ENCODE measurements at regions of chr20 and their contacts with region 1.

Region 1: GRCh38 chr20:22379472-22379871 is 204.9 kb downstream of the FOXA2 start:
- DNase-seq: peak; percentile 99
- H3K4me3 Mint-ChIP-seq: no peak overlapping the region
- H3K27ac Mint-ChIP-seq: peak overlapping the region; percentile 75
- H3K4me1 Mint-ChIP-seq: peaks cover 77% of the 10 kb centered on the region
- H3K27me3 Mint-ChIP-seq: no peaks in the 10 kb centered on the region
- CTCF ChIP-seq: no peak

Region 2: GRCh38 chr20:22425344-22426295 is 46.1 kb after region 1 on chr20:
- CTCF ChIA-PET with region 1: no interaction called
- POLR2A ChIA-PET with region 1: no interaction called
- intact Hi-C with region 1: no loop called
- DNase-seq: no peak
- H3K4me3 Mint-ChIP-seq: no peak overlapping the region
- H3K27ac Mint-ChIP-seq: no peak overlapping the region
- H3K4me1 Mint-ChIP-seq: peaks cover 5% of the 10 kb centered on the region
- H3K27me3 Mint-ChIP-seq: no peaks in the 10 kb centered on the region
- CTCF ChIP-seq: no peak

Region 3: GRCh38 chr20:23629017-23629541 is 1249.6 kb after region 1 on chr20:
- CTCF ChIA-PET with region 1: no interaction called
- POLR2A ChIA-PET with region 1: interaction called, 4 read pairs
- intact Hi-C with region 1: loop called (anchors 5 kb)
- DNase-seq: peak; percentile 96
- H3K4me3 Mint-ChIP-seq: no peak overlapping the region
- H3K27ac Mint-ChIP-seq: peak overlapping the region; percentile 92
- H3K4me1 Mint-ChIP-seq: peaks cover 37% of the 10 kb centered on the region
- H3K27me3 Mint-ChIP-seq: no peaks in the 10 kb centered on the region
- CTCF ChIP-seq: no peak